ENCODE measurements at regions of chr9 and their contacts with region 1.

Region 1: DNA sequence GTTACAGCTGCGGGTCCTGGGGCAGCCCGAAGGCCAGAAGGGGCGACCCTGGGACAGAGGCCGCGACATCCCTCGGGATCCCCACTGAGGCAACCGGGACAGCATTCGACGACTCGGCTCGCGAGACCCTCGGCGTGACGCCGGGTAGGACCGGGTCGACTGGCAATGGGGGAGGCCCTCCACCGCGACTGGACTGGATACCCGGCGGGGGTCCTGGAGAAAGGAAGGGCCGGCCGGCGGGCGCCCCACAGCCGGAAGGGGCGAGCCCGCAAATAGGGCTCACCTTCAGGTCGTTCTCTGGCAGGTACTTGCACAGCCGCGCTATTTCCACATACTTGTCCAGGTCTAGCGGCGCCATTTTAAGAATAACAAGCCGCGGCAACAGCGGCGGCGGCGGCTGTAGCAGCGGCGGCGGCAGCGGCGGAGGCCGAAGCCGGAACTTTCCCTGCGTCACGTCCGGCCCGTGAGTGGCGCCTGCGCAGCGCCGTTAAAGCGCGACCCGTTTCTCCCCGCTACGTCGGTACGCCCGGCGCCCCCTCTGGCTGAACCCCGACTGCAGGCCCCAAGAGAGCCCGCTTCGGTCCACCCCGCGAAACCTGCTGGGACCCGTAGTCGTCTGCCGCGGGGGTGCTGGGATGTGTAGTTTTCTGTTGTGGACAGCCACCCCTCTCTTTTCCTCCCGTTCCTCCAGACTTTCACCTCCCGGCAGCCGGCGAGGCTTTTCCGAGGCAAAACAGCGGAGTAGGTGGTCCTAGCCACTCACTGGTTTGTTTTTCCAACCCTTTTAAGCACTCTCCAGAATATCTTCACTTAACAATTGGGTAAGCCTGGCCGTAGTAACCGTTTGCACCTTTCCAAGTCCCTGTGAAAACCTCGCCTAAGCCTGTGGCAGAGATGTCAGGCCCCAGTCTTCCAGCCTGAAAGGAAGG is at the start of gene PPP6C:
- DNase-seq: peak in 1 of 2 donors; percentile 92
- H3K4me3 ChIP-seq: peak within 1 kb of the TSS; percentile 68 to 98
- H3K27ac ChIP-seq: peak within 1 kb of the TSS; percentile 92
- H3K4me1 ChIP-seq: peaks cover 52% of the 10 kb centered on the region
- H3K27me3 ChIP-seq: no peaks in the 10 kb centered on the region
- CTCF ChIP-seq: peak; percentile 43 to 63 (median 49)
- POLR2A ChIP-seq: peak in 1 of 2 donors; percentile 67
- total RNA-seq, gene PPP6C: 26.8 TPM

Region 2: DNA sequence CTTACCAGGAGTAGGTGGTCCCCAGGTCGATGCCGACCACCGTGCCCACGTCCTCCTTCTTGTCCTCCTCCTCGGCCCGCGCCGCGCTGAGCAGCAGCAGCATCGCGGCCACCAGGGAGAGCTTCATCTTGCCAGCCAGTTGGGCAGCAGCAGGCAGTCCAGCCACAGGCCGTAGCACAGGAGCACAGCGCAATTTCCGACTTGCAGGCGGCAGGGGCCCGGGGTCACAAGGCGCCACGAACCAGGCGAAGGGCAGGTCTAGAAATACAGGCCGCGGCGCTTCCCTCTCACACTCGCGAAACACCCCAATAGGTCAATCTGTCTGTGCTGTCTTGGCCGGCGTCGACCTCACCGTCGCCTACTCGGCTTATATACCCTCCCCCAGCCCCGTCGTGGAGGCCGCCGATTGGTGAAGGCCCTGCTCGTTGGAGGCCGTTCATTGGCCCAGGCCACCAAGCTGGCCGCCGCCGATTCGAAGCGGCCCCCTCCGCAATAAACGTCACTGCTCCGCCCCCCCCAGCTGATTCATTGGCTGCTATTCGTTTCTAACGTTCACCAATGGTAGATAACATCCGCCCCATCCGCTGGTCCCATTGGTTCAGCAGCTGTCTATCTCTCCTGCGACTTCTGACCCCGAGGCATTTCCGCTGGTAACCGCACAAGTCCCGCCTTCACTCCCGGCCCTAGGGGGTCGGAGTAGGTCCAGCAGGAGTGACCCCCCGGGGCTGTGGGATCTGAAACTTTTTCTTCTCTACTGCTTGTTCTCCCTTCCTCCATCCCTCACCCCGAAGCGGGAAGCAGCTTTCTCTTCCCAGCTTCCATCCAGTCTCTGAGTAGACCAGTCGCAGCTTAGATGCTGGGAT is 51.6 kb after region 1 on chr9 and contains the start of gene HSPA5:
- intact Hi-C with region 1: loop called (anchors 10 kb)
- DNase-seq: peak; percentile 99 to 100
- H3K4me3 ChIP-seq: peak within 1 kb of the TSS; percentile 88 to 96
- H3K27ac ChIP-seq: peak within 1 kb of the TSS; percentile 97
- H3K4me1 ChIP-seq: peaks cover 49% of the 10 kb centered on the region
- H3K27me3 ChIP-seq: no peaks in the 10 kb centered on the region
- CTCF ChIP-seq: no peak
- POLR2A ChIP-seq: peak; percentile 93 to 97
- total RNA-seq, gene HSPA5: 88.4 TPM

Region 3: GRCh38 chr9:125332527-125332926 is 142.9 kb after region 1 on chr9:
- intact Hi-C with region 1: no loop called
- DNase-seq: no peak
- H3K4me3 ChIP-seq: no peak overlapping the region
- H3K27ac ChIP-seq: no peak overlapping the region
- H3K4me1 ChIP-seq: no peaks in the 10 kb centered on the region
- H3K27me3 ChIP-seq: no peaks in the 10 kb centered on the region
- CTCF ChIP-seq: no peak
- POLR2A ChIP-seq: no peak